Naive thymus-derived CD4-positive, alpha-beta T cell (primary cell): ENCODE measurements at regions of chrX and their contacts with region 1.

Region 1: DNA sequence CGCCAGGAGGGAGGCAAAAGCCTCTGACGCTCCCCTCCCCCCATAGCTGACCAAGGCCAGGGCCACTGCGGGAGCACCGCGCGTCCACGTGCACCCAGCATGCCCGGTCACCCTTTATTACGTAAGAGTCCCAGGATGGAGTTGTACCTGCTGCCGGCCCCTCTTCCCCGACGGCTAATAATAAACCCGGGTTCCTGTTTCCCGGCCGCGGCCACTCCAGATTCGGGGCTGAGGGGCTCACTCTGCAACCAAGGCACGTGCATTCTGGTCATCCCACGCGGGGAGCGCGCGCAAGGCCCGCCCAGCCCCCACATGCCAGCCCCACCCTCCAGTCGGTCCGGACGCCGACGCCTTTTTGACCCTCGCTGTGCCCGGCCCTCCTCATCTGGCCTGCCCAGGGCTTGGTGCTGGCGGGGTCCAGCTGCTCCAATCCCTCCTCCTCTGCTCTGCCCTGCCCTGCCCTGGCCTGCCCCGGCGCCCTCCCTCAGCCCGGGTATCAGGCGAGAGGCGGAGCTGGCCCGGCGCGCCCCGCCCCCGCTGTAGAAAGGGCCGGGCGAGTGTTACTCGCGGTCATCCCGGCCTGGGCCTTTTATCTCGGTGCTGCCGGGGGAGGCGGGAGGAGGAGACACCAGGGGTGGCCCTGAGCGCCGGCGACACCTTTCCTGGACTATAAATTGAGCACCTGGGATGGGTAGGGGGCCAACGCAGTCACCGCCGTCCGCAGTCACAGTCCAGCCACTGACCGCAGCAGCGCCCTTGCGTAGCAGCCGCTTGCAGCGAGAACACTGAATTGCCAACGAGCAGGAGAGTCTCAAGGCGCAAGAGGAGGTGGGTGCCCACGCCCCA is 2.5 kb downstream of the MID1IP1 start:
- DNase-seq: peak in 5 of 9 donors; percentile 35 to 83 (median 41)
- ATAC-seq: peak; percentile 68
- H3K4me3 ChIP-seq: peak overlapping the region; percentile 74
- H3K4me3 Mint-ChIP-seq: peak overlapping the region; percentile 88 to 95 (median 93)
- H3K27ac ChIP-seq: peak overlapping the region; percentile 77
- H3K27ac Mint-ChIP-seq: peak overlapping the region; percentile 92 to 98 (median 95)
- H3K4me1 ChIP-seq: peaks cover 6 to 10% of the 10 kb centered on the region in 2 donors
- H3K4me1 Mint-ChIP-seq: peaks cover 0 to 33% (median 23%) of the 10 kb centered on the region in 7 donors
- H3K27me3 ChIP-seq: no peaks in the 10 kb centered on the region
- H3K27me3 Mint-ChIP-seq: no peaks in the 10 kb centered on the region

Region 2: DNA sequence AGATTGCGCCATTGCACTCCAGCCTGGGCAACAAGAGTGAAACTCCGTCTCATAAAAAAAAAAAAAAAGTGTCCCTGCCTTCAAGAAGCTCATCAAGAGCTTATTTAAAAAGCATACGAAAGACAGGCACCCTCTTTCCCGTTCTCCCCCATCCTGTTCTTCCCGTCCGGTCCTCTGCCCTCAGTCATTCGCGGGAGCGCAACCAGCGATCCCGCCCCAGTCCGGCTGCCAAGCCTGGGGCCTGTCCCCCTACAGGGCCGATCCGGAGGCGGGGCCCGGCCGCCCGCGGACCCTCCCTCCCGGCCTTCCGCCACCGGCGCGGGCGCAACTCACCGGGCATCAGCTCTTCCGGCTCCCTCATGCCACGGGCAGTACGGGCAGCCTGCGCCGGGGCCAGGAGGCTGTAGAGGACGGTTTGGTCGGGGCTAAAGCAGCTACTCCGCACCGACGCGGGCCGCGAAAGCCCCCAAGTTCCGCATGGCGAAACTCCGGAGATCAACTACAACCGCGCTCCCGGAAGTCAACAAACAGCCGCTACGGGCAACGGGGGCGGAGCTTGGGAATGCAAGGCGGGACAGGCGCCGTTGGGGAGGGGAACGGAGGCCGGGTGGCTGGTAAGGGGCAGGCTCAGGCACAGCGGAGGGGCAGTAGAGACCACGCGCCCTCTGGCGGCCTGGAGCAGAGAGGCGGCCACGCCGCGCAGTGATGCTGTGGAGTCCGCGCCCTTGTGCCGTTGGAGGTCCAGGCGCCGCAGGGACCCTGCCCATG is 476.6 kb before region 1 on chrX and contains the start of gene RPGR:
- CTCF ChIA-PET with region 1: no interaction called
- POLR2A ChIA-PET with region 1: no interaction called
- intact Hi-C with region 1: loop called in 1 of 2 experiments (anchors 5 kb)
- DNase-seq: peak; percentile 80 to 91 (median 88)
- ATAC-seq: peak; percentile 99
- H3K4me3 ChIP-seq: peak within 1 kb of the TSS; percentile 67
- H3K4me3 Mint-ChIP-seq: peak within 1 kb of the TSS; percentile 88 to 96 (median 92)
- H3K27ac ChIP-seq: peak within 1 kb of the TSS; percentile 77
- H3K27ac Mint-ChIP-seq: peak within 1 kb of the TSS; percentile 80 to 98 (median 93)
- H3K4me1 ChIP-seq: peaks cover 0 to 12% of the 10 kb centered on the region in 2 donors
- H3K4me1 Mint-ChIP-seq: peaks cover 1 to 28% (median 26%) of the 10 kb centered on the region in 7 donors
- H3K27me3 ChIP-seq: no peaks in the 10 kb centered on the region
- H3K27me3 Mint-ChIP-seq: no peaks in the 10 kb centered on the region
- total RNA-seq, gene RPGR: 4.3 to 26.0 (median 10.9) TPM

Region 3: DNA sequence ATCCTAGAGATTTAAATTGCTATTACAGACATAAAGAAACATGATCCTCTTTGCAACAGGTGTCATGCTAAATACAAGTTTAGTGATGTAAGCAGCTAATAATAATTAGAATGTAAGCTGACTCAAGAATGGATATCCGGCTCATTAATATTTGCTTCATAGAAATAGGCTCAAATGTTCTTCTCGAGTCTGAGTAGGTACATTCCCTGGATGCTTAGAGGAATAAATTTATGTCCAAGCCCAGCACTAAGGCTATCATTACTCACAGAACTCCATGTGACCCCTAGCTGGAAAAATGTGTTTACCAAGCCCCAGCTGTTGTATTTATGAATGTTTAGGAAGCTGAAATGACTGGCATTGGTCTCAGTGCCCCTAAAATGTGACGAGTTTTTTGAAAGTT is 330.1 kb before region 1 on chrX:
- CTCF ChIA-PET with region 1: no interaction called
- POLR2A ChIA-PET with region 1: no interaction called
- intact Hi-C with region 1: no loop called
- DNase-seq: no peak
- ATAC-seq: no peak
- H3K4me3 ChIP-seq: no peak overlapping the region
- H3K4me3 Mint-ChIP-seq: no peak overlapping the region
- H3K27ac ChIP-seq: no peak overlapping the region
- H3K27ac Mint-ChIP-seq: no peak overlapping the region
- H3K4me1 ChIP-seq: no peaks in the 10 kb centered on the region
- H3K4me1 Mint-ChIP-seq: no peaks in the 10 kb centered on the region
- H3K27me3 ChIP-seq: no peaks in the 10 kb centered on the region
- H3K27me3 Mint-ChIP-seq: no peaks in the 10 kb centered on the region

Region 4: DNA sequence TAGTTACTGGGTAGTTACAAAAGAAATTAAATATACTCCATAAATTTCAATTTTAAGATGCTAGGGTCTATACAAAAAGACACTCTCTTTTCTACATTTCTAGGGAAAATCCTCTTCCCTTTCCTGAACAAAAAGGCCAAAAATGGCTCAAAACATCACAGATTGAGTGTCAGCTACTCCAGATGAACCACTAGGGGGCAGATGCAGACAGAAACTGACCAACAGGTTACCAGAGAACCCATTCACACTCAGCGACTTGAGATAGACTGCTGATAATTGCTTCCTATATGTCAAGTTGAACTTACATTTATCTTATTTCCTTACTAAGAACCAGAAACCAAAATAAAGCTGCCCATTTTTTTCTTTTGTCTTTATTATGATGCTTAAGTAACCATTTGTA is 85.9 kb before region 1 on chrX:
- CTCF ChIA-PET with region 1: no interaction called
- POLR2A ChIA-PET with region 1: no interaction called
- intact Hi-C with region 1: no loop called
- DNase-seq: no peak
- ATAC-seq: no peak
- H3K4me3 ChIP-seq: no peak overlapping the region
- H3K4me3 Mint-ChIP-seq: no peak overlapping the region
- H3K27ac ChIP-seq: no peak overlapping the region
- H3K27ac Mint-ChIP-seq: no peak overlapping the region
- H3K4me1 ChIP-seq: no peaks in the 10 kb centered on the region
- H3K4me1 Mint-ChIP-seq: peaks cover 0 to 13% (median 7%) of the 10 kb centered on the region in 7 donors
- H3K27me3 ChIP-seq: no peaks in the 10 kb centered on the region
- H3K27me3 Mint-ChIP-seq: peaks cover 0 to 9% (median 2%) of the 10 kb centered on the region in 5 donors

Region 5: DNA sequence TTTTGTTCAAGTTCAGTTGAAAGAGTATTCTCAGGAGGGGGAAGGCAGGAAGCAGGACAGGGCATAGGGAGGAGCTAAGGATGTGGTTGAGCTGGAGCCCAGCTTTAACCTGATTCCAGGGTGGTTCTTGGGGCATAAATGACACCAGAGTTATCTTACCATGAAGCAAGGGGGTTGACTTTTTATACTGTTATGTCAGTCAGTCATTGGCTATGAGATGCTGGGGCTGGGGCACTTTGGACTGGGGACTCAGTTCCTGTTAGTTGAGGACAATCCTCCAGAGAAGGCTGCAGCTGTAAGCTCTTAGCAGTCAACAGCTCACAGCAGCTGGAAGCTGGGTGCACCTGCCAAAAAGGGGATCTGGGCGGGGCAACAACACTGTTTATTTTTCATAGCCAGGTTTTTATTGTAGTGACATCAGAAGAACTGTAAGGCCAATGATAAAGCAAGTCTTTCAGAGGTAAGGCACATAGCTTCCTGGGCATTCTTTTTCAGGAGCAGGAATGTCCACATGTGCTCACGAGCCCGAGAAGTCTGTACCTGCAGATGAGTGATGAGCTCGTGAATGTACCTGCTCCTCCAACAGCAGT is 75.9 kb after region 1 on chrX:
- CTCF ChIA-PET with region 1: interaction called, 3 read pairs
- POLR2A ChIA-PET with region 1: interaction called, 51 read pairs
- intact Hi-C with region 1: loop called in 1 of 2 experiments (anchors 2 kb)
- DNase-seq: peak in 7 of 9 donors; percentile 8 to 47 (median 29)
- ATAC-seq: peak; percentile 61
- H3K4me3 ChIP-seq: no peak overlapping the region
- H3K4me3 Mint-ChIP-seq: peak overlapping the region; percentile 14 to 65 (median 56)
- H3K27ac ChIP-seq: no peak overlapping the region
- H3K27ac Mint-ChIP-seq: peak overlapping the region in 8 of 9 donors; percentile 8 to 73 (median 46)
- H3K4me1 ChIP-seq: peaks cover 0 to 14% of the 10 kb centered on the region in 2 donors
- H3K4me1 Mint-ChIP-seq: peaks cover 11 to 25% (median 23%) of the 10 kb centered on the region in 7 donors
- H3K27me3 ChIP-seq: no peaks in the 10 kb centered on the region
- H3K27me3 Mint-ChIP-seq: no peaks in the 10 kb centered on the region

Region 6: GRCh38 chrX:39065051-39065871 is 261.5 kb after region 1 on chrX:
- CTCF ChIA-PET with region 1: no interaction called
- POLR2A ChIA-PET with region 1: no interaction called
- intact Hi-C with region 1: no loop called
- DNase-seq: no peak
- ATAC-seq: no peak
- H3K4me3 ChIP-seq: no peak overlapping the region
- H3K4me3 Mint-ChIP-seq: no peak overlapping the region
- H3K27ac ChIP-seq: no peak overlapping the region
- H3K27ac Mint-ChIP-seq: peak overlapping the region in 1 of 9 donors; percentile 84
- H3K4me1 ChIP-seq: no peaks in the 10 kb centered on the region
- H3K4me1 Mint-ChIP-seq: peaks cover 0 to 2% (median 0%) of the 10 kb centered on the region in 7 donors
- H3K27me3 ChIP-seq: no peaks in the 10 kb centered on the region
- H3K27me3 Mint-ChIP-seq: no peaks in the 10 kb centered on the region

Region 7: GRCh38 chrX:39196192-39197102 is 392.6 kb after region 1 on chrX:
- CTCF ChIA-PET with region 1: no interaction called
- POLR2A ChIA-PET with region 1: no interaction called
- intact Hi-C with region 1: loop called in 1 of 2 experiments (anchors 5 kb)
- DNase-seq: peak in 3 of 9 donors; percentile 10 to 52 (median 21)
- ATAC-seq: peak; percentile 85
- H3K4me3 ChIP-seq: peak overlapping the region; percentile 52
- H3K4me3 Mint-ChIP-seq: peak overlapping the region in 9 of 10 donors; percentile 33 to 84 (median 69)
- H3K27ac ChIP-seq: no peak overlapping the region
- H3K27ac Mint-ChIP-seq: peak overlapping the region in 2 of 9 donors; percentile 4 to 85
- H3K4me1 ChIP-seq: peaks cover 14 to 18% of the 10 kb centered on the region in 2 donors
- H3K4me1 Mint-ChIP-seq: peaks cover 9 to 57% (median 25%) of the 10 kb centered on the region in 7 donors
- H3K27me3 ChIP-seq: no peaks in the 10 kb centered on the region
- H3K27me3 Mint-ChIP-seq: no peaks in the 10 kb centered on the region

Region 8: GRCh38 chrX:39582091-39582490 is 778.3 kb after region 1 on chrX:
- CTCF ChIA-PET with region 1: no interaction called
- POLR2A ChIA-PET with region 1: no interaction called
- intact Hi-C with region 1: no loop called
- DNase-seq: no peak
- ATAC-seq: no peak
- H3K4me3 ChIP-seq: no peak overlapping the region
- H3K4me3 Mint-ChIP-seq: no peak overlapping the region
- H3K27ac ChIP-seq: no peak overlapping the region
- H3K27ac Mint-ChIP-seq: no peak overlapping the region
- H3K4me1 ChIP-seq: no peaks in the 10 kb centered on the region
- H3K4me1 Mint-ChIP-seq: peaks cover 0 to 21% (median 10%) of the 10 kb centered on the region in 7 donors
- H3K27me3 ChIP-seq: no peaks in the 10 kb centered on the region
- H3K27me3 Mint-ChIP-seq: no peaks in the 10 kb centered on the region

Region 9: GRCh38 chrX:39859991-39860861 is 1056.4 kb after region 1 on chrX:
- CTCF ChIA-PET with region 1: no interaction called
- POLR2A ChIA-PET with region 1: no interaction called
- intact Hi-C with region 1: loop called in 1 of 2 experiments (anchors 5 kb)
- DNase-seq: peak in 5 of 9 donors; percentile 16 to 74 (median 19)
- ATAC-seq: peak; percentile 40
- H3K4me3 ChIP-seq: no peak overlapping the region
- H3K4me3 Mint-ChIP-seq: peak overlapping the region in 6 of 10 donors; percentile 12 to 60 (median 48)
- H3K27ac ChIP-seq: no peak overlapping the region
- H3K27ac Mint-ChIP-seq: peak overlapping the region in 8 of 9 donors; percentile 37 to 89 (median 56)
- H3K4me1 ChIP-seq: peaks cover 17 to 19% of the 10 kb centered on the region in 2 donors
- H3K4me1 Mint-ChIP-seq: peaks cover 10 to 50% (median 26%) of the 10 kb centered on the region in 7 donors
- H3K27me3 ChIP-seq: no peaks in the 10 kb centered on the region
- H3K27me3 Mint-ChIP-seq: no peaks in the 10 kb centered on the region

Region 10: DNA sequence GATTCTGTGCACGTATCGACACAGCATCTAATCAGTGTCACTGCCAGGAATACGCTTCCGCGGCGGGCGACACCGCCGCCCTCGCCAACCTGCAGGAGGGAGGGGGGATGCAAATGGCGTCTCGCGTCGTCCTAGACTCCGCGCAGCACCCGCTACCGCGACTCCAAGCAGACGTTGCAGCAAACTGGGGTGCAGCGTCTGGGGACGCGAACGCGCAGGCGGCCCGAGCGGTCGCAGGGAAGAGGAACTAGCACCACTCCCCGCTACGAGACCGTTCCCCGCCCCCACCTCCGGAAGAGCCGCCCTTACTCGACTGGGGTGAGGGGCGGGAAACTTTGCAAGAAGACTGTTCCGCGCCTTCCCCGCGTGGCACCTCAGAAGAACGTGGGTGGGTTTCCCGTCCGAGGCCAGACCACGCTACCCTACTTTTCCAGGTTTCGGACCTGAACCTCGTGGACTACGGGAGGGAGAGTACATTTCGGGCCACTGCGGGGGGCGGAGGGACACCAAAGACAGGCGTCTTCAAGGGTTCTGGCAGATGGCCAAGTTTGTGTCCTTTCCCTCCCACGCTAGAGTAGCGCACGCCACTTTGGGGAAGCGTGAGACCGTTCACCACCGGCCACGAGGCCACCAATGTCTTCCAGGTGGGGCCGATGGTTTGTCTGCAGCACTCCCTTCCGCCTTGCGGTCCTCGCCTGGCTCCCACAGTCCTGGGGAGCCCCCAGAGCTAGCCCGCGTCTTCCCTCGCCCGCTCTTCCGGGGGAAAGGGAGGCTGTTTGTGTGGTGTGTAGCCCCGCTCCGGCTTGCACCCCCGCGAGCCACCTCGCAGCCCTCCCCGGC is 1371.9 kb after region 1 on chrX:
- CTCF ChIA-PET with region 1: no interaction called
- POLR2A ChIA-PET with region 1: interaction called, 3 read pairs
- intact Hi-C with region 1: loop called (anchors 2 to 5 kb)
- DNase-seq: peak; percentile 60 to 91 (median 83)
- ATAC-seq: peak; percentile 58
- H3K4me3 ChIP-seq: peak overlapping the region; percentile 73
- H3K4me3 Mint-ChIP-seq: peak overlapping the region; percentile 89 to 93 (median 90)
- H3K27ac ChIP-seq: peak overlapping the region; percentile 98
- H3K27ac Mint-ChIP-seq: peak overlapping the region; percentile 96 to 100 (median 98)
- H3K4me1 ChIP-seq: peaks cover 13 to 18% of the 10 kb centered on the region in 2 donors
- H3K4me1 Mint-ChIP-seq: peaks cover 5 to 46% (median 36%) of the 10 kb centered on the region in 7 donors
- H3K27me3 ChIP-seq: no peaks in the 10 kb centered on the region
- H3K27me3 Mint-ChIP-seq: no peaks in the 10 kb centered on the region

Region 11: GRCh38 chrX:40735325-40736169 is 1931.7 kb after region 1 on chrX and contains the start of gene MED14:
- CTCF ChIA-PET with region 1: no interaction called
- POLR2A ChIA-PET with region 1: no interaction called
- intact Hi-C with region 1: loop called (anchors 10 kb)
- DNase-seq: peak; percentile 74 to 97 (median 96)
- ATAC-seq: peak; percentile 94
- H3K4me3 ChIP-seq: peak within 1 kb of the TSS; percentile 95
- H3K4me3 Mint-ChIP-seq: peak within 1 kb of the TSS; percentile 87 to 99 (median 95)
- H3K27ac ChIP-seq: peak within 1 kb of the TSS; percentile 93
- H3K27ac Mint-ChIP-seq: peak within 1 kb of the TSS; percentile 96 to 100 (median 98)
- H3K4me1 ChIP-seq: peaks cover 6 to 11% of the 10 kb centered on the region in 2 donors
- H3K4me1 Mint-ChIP-seq: peaks cover 9 to 71% (median 48%) of the 10 kb centered on the region in 7 donors
- H3K27me3 ChIP-seq: no peaks in the 10 kb centered on the region
- H3K27me3 Mint-ChIP-seq: no peaks in the 10 kb centered on the region
- total RNA-seq, gene MED14: 37.9 to 49.5 (median 44.3) TPM